ENCODE measurements at regions of chr5 and their contacts with region 1.

Region 1: DNA sequence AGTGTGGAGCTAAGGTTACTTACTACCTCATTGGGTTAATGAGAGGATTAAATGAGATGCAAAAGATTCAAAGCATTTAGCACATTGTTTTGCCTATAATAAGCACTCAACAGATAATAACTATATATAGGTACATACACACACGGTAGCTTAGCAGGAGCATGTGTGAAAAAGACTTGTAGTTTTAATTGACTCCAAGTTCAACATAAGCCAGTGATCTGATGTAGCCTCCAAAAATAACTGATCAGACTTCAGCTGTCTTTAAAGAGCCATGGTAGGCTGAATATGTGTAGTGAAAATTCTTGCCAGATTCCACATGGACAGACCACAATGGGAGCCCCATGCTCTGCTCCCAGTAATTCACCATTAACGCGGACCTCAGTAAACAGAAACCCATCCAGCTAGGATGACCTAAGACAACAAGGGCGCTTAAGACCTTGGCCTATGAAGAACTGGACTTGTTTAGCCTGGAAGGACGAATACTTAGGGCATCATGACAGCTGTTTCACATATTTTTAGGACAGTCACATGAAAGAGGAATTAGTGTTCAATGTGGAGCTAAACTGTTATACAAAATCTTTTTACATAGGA is 115.1 kb upstream of the ZNF366 start:
- DNase-seq: no peak
- H3K4me3 ChIP-seq: no peak overlapping the region
- H3K4me3 Mint-ChIP-seq: no peak overlapping the region
- H3K27ac ChIP-seq: no peak overlapping the region
- H3K27ac Mint-ChIP-seq: no peak overlapping the region
- H3K4me1 ChIP-seq: no peaks in the 10 kb centered on the region
- H3K4me1 Mint-ChIP-seq: no peaks in the 10 kb centered on the region
- H3K27me3 ChIP-seq: no peaks in the 10 kb centered on the region
- H3K27me3 Mint-ChIP-seq: peaks cover 6 to 11% of the 10 kb centered on the region in 2 donors

Region 2: DNA sequence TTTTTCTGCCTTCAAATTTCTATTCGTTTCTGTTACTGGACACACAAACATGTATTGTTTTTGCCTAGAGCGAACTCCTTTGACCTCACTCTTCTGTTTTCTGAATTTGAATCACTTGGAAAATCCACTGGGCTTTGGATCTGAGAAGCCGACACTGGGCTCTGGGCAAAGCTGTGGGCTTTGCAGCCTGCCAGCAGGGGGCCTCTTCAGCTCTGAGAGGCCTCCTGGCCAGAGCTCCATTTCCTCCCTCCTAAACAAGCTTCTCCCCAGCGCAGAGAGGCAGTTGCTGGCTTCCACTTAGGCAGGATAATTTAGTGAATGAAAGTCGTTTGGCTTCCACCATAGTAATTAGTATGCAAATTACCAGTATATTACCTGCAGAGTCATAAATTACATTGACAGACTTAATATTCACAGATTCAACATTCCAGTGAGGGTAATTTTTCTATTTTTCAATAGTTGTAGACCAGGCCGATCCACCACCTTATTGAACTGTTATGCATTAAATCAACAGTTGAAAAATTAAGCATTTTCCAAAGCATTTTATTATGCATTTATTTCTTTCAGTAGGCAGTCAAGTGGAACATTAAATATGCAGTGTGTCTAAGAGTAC is 11.0 kb before region 1 on chr5:
- CTCF ChIA-PET with region 1: interaction called, 14 read pairs
- POLR2A ChIA-PET with region 1: no interaction called
- intact Hi-C with region 1: no loop called
- DNase-seq: peak in 4 of 5 donors; percentile 16 to 24 (median 22)
- H3K4me3 ChIP-seq: no peak overlapping the region
- H3K4me3 Mint-ChIP-seq: peak overlapping the region in 1 of 8 donors; percentile 29
- H3K27ac ChIP-seq: no peak overlapping the region
- H3K27ac Mint-ChIP-seq: no peak overlapping the region
- H3K4me1 ChIP-seq: no peaks in the 10 kb centered on the region
- H3K4me1 Mint-ChIP-seq: peaks cover 0 to 6% (median 1%) of the 10 kb centered on the region in 4 donors
- H3K27me3 ChIP-seq: no peaks in the 10 kb centered on the region
- H3K27me3 Mint-ChIP-seq: peaks cover 4% of the 10 kb centered on the region in 2 donors

Measured in CD4-positive, alpha-beta memory T cell (primary cell).